Ovary (tissue), 10 donors: ENCODE measurements at regions of chr3 and their contacts with region 1.

Region 1: DNA sequence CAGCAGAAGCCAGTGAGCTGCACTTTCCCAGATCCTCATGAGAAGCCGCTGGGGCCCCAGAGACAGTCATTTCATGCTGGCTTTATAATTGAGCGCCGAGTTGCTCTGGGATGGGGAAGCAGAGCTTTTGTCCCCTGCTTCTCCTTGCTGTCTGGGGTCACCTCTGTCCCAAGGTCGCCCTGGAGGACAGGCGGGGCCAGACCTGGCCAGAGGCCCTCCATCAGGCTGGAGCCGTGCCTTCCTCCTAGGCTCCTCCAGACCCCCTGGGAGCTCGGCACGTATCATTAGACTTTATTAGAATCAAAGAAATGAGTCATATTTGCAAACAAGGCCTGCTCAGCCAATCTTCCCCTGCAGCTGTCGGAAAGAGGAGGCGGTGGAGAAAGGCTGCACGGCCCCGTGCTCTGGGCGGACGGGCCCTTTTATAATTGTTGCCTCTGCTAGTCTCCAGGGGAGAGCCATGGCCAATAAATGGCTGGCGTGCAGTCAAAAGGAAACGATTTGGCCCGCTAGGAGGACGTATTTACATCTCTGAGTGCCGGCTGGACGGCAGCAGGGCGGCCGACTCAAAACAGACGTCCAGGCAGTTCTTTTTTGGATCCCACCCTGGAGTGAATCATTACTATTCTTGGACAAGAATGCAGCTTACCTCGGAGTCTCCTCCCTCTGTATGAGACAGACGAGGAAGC is 50.4 kb downstream of the SLC6A6 start:
- DNase-seq: peak; percentile 95 to 97 (median 96)
- H3K4me3 ChIP-seq: no peak overlapping the region
- H3K27ac ChIP-seq: peak overlapping the region; percentile 88 to 92
- H3K4me1 ChIP-seq: peaks cover 35% of the 10 kb centered on the region
- H3K27me3 ChIP-seq: no peaks in the 10 kb centered on the region
- CTCF ChIP-seq: peak in 2 of 3 donors; percentile 26 to 42
- EP300 ChIP-seq: peak; percentile 19
- POLR2A ChIP-seq: no peak

Region 2: DNA sequence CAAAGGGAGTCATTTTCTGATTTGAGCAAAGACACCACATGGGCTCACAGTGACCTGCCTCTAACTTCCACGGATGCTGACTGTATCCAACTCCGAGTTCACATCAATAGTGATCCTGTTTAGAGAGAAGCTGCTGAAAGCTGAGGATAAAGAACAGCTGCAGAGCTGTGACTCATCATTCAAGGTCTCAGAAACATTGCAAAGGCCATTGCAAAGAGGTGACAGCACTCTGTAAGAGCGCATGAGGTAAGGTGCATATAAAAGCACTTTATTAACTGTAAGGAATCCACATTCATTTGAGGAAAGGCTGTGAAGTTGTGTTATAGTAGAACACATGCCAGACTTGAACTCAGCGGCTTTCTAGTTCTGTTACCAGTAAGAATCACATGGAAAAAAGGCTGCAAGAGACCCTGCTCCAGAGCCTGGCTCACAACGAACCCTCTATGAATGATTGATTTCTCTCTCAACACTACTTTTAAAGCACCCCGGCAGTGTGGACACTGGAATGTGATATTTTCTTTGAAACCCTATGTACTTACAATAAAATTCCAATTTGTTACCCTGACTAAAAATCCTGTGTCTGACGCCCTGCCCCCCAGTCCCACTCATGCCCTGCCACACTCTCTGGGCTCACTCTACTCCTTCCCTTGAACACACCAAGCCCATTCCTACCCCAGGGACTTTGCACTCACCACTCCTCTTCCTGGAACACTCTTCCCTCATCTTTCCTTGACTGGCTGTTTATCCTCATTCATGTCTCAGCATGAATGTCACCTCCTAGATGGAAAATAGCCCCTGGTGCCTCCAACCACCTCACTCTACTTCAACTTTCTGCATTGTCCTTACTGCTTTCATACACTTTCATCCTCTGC is 163.0 kb before region 1 on chr3:
- intact Hi-C with region 1: loop called in 1 of 4 experiments (anchors 10 kb)
- DNase-seq: peak in 2 of 5 donors; percentile 47 to 66
- H3K4me3 ChIP-seq: no peak overlapping the region
- H3K27ac ChIP-seq: peak overlapping the region in 1 of 2 donors; percentile 61
- H3K4me1 ChIP-seq: peaks cover 10% of the 10 kb centered on the region
- H3K27me3 ChIP-seq: no peaks in the 10 kb centered on the region
- CTCF ChIP-seq: no peak
- EP300 ChIP-seq: no peak
- POLR2A ChIP-seq: no peak

Region 3: GRCh38 chr3:14410503-14411165 is 42.2 kb before region 1 on chr3:
- intact Hi-C with region 1: loop called in 2 of 4 experiments (anchors 5 to 10 kb)
- DNase-seq: no peak
- H3K4me3 ChIP-seq: no peak overlapping the region
- H3K27ac ChIP-seq: no peak overlapping the region
- H3K4me1 ChIP-seq: peaks cover 27% of the 10 kb centered on the region
- H3K27me3 ChIP-seq: no peaks in the 10 kb centered on the region
- CTCF ChIP-seq: no peak
- EP300 ChIP-seq: no peak
- POLR2A ChIP-seq: no peak